OCI-LY7 (cell line): ENCODE measurements at regions of chr2 and their contacts with region 1.

Region 1: DNA sequence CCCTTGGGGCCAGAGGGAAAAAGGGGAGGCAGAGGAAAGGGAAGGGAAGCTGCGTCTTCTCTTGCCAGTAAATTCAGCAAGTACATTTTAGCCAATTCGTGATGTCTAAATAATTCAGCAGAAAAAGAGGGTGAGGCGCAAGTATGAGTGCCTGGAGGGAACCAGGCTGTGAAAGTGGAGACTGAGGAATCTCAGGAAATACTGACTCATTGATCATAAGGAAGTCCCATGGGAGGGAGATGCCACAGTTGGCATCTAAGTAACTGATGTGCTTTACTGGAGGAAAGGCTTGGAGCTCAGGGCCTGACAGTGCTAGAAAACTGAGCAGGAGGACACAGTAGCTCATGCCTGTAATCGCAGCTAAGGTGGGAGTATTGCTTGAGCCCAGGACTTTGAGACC is 31.1 kb downstream of the KIF5C start:
- DNase-seq: no peak
- H3K4me3 ChIP-seq: no peak overlapping the region
- H3K27ac ChIP-seq: peak overlapping the region; percentile 64
- H3K4me1 ChIP-seq: peaks cover 36% of the 10 kb centered on the region
- CTCF ChIP-seq: no peak

Region 2: GRCh38 chr2:148829618-148830017 is 76.5 kb before region 1 on chr2:
- CTCF ChIA-PET with region 1: no interaction called
- POLR2A ChIA-PET with region 1: no interaction called
- intact Hi-C with region 1: no loop called
- DNase-seq: no peak
- H3K4me3 ChIP-seq: no peak overlapping the region
- H3K27ac ChIP-seq: no peak overlapping the region
- H3K4me1 ChIP-seq: no peaks in the 10 kb centered on the region
- CTCF ChIP-seq: no peak

Region 3: DNA sequence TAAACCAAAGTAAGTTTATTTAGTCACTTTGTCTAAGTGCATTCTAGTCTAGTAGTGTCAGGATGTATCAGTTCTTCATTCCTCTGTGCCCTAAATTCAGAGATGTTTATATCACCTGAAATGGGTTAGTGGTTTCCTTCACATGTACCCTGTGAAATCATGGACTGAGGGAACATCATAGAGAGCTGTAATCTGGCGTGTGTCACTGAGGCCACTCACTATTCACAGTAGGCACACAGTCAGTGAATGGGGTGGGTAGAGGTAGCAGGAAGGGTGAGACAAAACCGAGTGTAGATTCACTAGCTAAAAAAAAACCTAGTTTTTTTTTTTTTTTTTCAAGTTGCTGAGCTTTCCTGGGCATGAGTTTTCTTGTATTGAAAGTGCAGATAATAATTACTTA is 25.5 kb before region 1 on chr2:
- CTCF ChIA-PET with region 1: no interaction called
- POLR2A ChIA-PET with region 1: interaction called, 14 read pairs
- intact Hi-C with region 1: no loop called
- DNase-seq: no peak
- H3K4me3 ChIP-seq: no peak overlapping the region
- H3K27ac ChIP-seq: no peak overlapping the region
- H3K4me1 ChIP-seq: peaks cover 13% of the 10 kb centered on the region
- CTCF ChIP-seq: no peak